ENCODE measurements at regions of chr13 and their contacts with region 1.

Region 1: DNA sequence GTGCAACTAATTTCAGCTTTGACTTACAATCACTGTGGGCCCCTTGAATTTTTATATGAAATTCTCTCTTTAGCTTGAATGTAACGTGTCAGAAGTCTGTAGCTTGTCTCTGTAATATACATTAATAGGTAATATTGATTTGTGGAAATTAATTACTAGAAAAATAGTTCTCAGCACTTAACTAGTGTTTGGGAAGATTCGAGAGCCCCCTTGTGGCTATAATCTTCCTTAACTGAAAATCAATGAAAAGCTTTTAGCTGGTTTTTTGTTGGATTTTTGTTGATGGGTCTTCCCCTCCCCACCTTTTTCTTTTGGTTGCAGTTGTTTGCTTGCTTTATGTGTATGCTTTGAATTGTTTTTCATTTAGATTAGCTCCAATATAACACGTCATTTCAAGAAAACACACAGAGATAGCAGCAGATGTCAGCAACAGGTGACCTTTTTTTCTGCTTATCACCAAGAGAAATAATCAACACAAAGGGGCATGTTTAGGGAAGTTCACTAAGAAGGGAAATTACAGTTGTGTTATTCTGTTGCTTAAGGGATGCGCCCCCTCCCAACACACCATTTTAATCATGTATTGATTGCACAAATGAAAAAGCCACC is 176.8 kb downstream of the OXGR1 start:
- DNase-seq: peak; percentile 14
- H3K4me3 ChIP-seq: no peak overlapping the region
- H3K27ac ChIP-seq: no peak overlapping the region
- H3K4me1 ChIP-seq: peaks cover 0 to 3% of the 10 kb centered on the region in 2 experiments; a peak in 1 of 4 replicates
- H3K27me3 ChIP-seq: no peaks in the 10 kb centered on the region
- CTCF ChIP-seq: peak; percentile 66
- EP300 ChIP-seq: no peak
- RAD21 ChIP-seq: peak; percentile 78

Region 2: GRCh38 chr13:96053011-96053703 is 764.3 kb before region 1 on chr13 and contains the start of gene UGGT2:
- CTCF ChIA-PET with region 1: interaction called, 13 read pairs
- POLR2A ChIA-PET with region 1: no interaction called
- DNase-seq: peak; percentile 99
- H3K4me3 ChIP-seq: peak within 1 kb of the TSS; percentile 74 to 98
- H3K27ac ChIP-seq: peak within 1 kb of the TSS; percentile 68 to 85
- H3K4me1 ChIP-seq: peaks cover 0 to 3% of the 10 kb centered on the region in 2 experiments; a peak in 2 of 4 replicates
- H3K27me3 ChIP-seq: no peaks in the 10 kb centered on the region
- CTCF ChIP-seq: no peak
- EP300 ChIP-seq: no peak
- RAD21 ChIP-seq: no peak
- polyA plus RNA-seq, gene UGGT2: 13.3 and 20.2 TPM in 2 replicates

Region 3: DNA sequence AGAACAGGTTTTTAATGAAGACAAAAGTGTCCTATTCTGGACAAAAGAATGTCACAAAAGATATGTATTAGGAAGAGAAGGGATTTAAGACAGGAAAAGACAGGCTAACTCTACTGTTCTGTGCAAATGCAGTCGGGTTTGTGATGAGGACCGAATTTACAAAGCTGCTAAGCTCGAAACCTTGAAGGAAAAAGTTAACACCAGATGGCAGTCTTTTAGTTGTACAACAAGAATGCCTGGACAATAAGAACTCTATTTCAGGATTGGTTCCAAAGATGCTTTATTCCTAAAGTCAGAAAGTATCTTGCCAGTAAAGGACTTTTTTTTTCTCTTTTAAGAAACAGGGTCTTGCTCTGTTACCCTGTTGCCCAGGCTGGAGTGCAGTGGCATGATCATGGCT is 676.4 kb before region 1 on chr13:
- CTCF ChIA-PET with region 1: interaction called, 27 read pairs
- POLR2A ChIA-PET with region 1: no interaction called
- DNase-seq: no peak
- H3K4me3 ChIP-seq: no peak overlapping the region
- H3K27ac ChIP-seq: no peak overlapping the region
- H3K4me1 ChIP-seq: no peaks in the 10 kb centered on the region; a peak in 1 of 4 replicates
- H3K27me3 ChIP-seq: no peaks in the 10 kb centered on the region
- CTCF ChIP-seq: peak; percentile 32
- EP300 ChIP-seq: no peak
- RAD21 ChIP-seq: peak; percentile 50

Region 4: DNA sequence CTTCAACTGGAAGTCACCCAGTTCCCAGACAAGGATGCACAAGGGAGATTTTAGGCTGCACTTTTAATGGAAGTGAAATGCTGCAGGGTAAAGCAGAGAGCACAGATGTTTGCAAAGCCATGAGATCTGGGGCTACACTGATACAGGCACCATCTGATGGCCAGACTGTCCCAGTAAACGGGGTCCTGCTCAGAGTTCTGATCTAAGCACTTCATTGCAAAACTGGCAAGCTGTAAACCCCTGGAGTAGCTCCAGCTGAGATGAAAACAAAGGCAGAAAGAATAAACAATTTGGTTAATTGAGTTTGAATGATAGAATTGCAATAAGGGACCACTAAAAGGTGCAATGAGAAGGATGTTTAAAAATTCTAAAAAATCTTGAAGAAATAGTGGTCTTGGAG is 20.3 kb before region 1 on chr13:
- CTCF ChIA-PET with region 1: interaction called, 13 read pairs
- POLR2A ChIA-PET with region 1: no interaction called
- DNase-seq: peak; percentile 9
- H3K4me3 ChIP-seq: no peak overlapping the region
- H3K27ac ChIP-seq: peak overlapping the region in 1 of 2 experiments; percentile 22; a peak in 1 of 4 replicates
- H3K4me1 ChIP-seq: peaks cover 0 to 7% of the 10 kb centered on the region in 2 experiments; a peak in 2 of 4 replicates
- H3K27me3 ChIP-seq: no peaks in the 10 kb centered on the region
- CTCF ChIP-seq: no peak
- EP300 ChIP-seq: 0 out of 4 replicates have a peak, but pooled peaks of 1 of the 2 experiments have one; percentile 35
- RAD21 ChIP-seq: no peak

Region 5: GRCh38 chr13:96803456-96804100 is 13.9 kb before region 1 on chr13:
- CTCF ChIA-PET with region 1: interaction called, 13 read pairs
- POLR2A ChIA-PET with region 1: no interaction called
- DNase-seq: no peak
- H3K4me3 ChIP-seq: no peak overlapping the region
- H3K27ac ChIP-seq: no peak overlapping the region
- H3K4me1 ChIP-seq: no peaks in the 10 kb centered on the region
- H3K27me3 ChIP-seq: no peaks in the 10 kb centered on the region
- CTCF ChIP-seq: no peak
- EP300 ChIP-seq: no peak
- RAD21 ChIP-seq: no peak

Region 6: GRCh38 chr13:96958286-96958891 is 140.9 kb after region 1 on chr13:
- CTCF ChIA-PET with region 1: interaction called, 24 read pairs
- POLR2A ChIA-PET with region 1: no interaction called
- DNase-seq: peak; percentile 30
- H3K4me3 ChIP-seq: peak overlapping the region in 1 of 2 experiments; percentile 34; a peak in 1 of 4 replicates
- H3K27ac ChIP-seq: no peak overlapping the region
- H3K4me1 ChIP-seq: no peaks in the 10 kb centered on the region
- H3K27me3 ChIP-seq: no peaks in the 10 kb centered on the region
- CTCF ChIP-seq: peak; percentile 84
- EP300 ChIP-seq: no peak
- RAD21 ChIP-seq: peak; percentile 66

Measured in SK-N-SH (cell line).